B cell (primary cell): ENCODE measurements at regions of chr19 and their contacts with region 1.

Region 1: GRCh38 chr19:53431399-53432087 is at the start of gene ZNF761:
- DNase-seq: peak; percentile 97
- ATAC-seq: peak; percentile 98
- H3K4me3 ChIP-seq: peak within 1 kb of the TSS; percentile 60 to 83 (median 79)
- H3K4me3 Mint-ChIP-seq: peak within 1 kb of the TSS; percentile 95
- H3K27ac ChIP-seq: peak within 1 kb of the TSS; percentile 61 to 82
- H3K27ac Mint-ChIP-seq: peak within 1 kb of the TSS; percentile 89
- H3K4me1 ChIP-seq: peaks cover 10 to 13% of the 10 kb centered on the region in 2 donors
- H3K4me1 Mint-ChIP-seq: peaks cover 34% of the 10 kb centered on the region
- H3K27me3 ChIP-seq: no peaks in the 10 kb centered on the region
- H3K27me3 Mint-ChIP-seq: no peaks in the 10 kb centered on the region
- CTCF ChIP-seq: peak; percentile 39
- total RNA-seq, gene ZNF761: 14.9 and 18.9 TPM in 2 replicates

Region 2: DNA sequence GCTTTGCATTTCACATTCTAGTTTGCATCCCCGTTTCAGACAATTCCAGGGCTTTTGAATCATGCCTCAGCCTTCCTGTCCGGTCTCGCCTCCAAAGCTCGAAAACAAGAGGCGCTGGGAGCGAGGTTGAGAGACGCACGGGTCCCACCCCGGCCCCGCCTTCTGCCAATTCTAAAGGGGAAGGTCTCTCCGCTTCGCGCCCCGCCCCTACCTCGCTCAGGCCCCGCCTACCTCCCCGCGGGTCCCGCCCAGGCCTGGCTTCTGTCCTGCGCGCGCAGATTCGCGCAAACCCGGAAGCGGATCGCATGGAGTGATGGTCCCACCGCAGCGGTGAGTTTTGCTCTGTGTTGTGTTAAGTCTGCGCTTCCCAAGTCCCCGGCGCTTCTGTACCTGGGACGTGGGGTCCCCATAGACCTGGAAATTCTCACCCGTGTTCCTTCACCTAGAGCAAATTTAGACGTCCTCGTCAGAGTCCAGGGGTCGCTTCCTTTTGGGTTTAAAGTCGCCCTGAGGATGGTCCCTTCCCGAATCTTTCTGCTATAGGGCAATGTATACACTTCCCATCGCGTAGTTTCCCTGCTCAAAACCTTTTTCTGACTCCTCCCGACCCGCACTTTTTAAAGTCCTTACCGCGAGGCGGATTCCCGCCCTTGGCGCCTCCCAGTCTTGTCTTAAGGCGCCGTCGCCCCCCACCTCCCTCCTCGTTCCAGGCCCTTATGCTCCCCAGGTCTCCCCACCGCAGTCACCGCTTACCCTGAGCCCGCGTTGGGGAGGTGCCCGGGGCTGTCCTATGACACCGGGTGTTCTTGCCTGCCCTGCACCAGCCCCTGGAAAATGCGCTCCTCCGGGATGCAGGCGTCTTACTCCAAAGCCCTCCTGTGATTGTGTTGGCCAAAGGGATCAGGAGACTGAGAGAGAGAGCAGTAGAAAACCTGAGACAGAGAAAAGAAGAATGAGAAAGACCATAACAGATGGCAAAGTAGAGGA is 97.8 kb before region 1 on chr19 and contains the start of gene ZNF845:
- CTCF ChIA-PET with region 1: no interaction called
- POLR2A ChIA-PET with region 1: no interaction called
- intact Hi-C with region 1: loop called (anchors 1 kb)
- DNase-seq: peak; percentile 95
- ATAC-seq: peak; percentile 100
- H3K4me3 ChIP-seq: peak within 1 kb of the TSS; percentile 94 to 99 (median 96)
- H3K4me3 Mint-ChIP-seq: peak within 1 kb of the TSS; percentile 96
- H3K27ac ChIP-seq: peak within 1 kb of the TSS; percentile 60 to 81
- H3K27ac Mint-ChIP-seq: peak within 1 kb of the TSS; percentile 95
- H3K4me1 ChIP-seq: peaks cover 10 to 21% of the 10 kb centered on the region in 2 donors
- H3K4me1 Mint-ChIP-seq: peaks cover 22% of the 10 kb centered on the region
- H3K27me3 ChIP-seq: peaks cover 0 to 3% (median 0%) of the 10 kb centered on the region in 4 experiments
- H3K27me3 Mint-ChIP-seq: peaks cover 11% of the 10 kb centered on the region
- CTCF ChIP-seq: no peak
- total RNA-seq, gene ZNF845: 16.9 and 17.4 TPM in 2 replicates

Region 3: DNA sequence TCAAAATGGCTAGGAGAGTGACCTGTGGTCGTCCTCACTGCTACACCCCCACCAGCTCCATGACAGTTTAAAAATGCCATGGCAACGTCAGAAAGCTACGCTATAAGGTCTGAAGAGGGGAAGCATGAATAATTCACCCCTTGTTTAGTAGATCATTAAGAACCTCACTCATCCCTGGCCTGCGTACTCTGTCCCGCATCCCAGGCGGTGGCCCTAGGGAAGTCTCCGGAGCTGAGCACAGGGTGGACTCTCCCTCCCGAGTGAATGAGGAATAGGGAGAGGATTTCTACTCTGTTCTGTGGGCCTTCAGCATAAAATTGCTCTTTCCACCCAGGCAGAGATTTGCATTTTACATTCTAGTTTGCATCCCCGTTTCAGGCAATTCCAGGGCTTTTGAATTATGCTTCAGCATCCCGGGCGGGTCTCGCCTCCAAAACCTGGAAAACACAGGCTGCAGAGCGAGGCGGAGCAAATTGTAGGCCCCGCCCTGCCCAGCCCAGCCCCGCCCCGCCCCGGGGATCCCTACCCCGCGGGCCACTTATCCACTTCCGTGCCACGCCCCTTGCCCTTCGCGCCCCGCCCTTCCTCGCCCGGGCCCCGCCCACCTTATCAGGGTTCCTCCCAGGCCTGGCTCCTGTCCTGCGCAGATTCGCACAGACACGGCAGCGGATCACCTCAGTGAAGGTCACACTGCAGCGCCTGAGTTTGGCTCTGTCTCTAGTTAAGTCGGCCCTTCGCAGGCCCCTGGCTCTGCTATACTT is 73.5 kb before region 1 on chr19:
- CTCF ChIA-PET with region 1: no interaction called
- POLR2A ChIA-PET with region 1: no interaction called
- intact Hi-C with region 1: no loop called
- DNase-seq: no peak
- ATAC-seq: no peak
- H3K4me3 ChIP-seq: no peak overlapping the region
- H3K4me3 Mint-ChIP-seq: no peak overlapping the region
- H3K27ac ChIP-seq: no peak overlapping the region
- H3K27ac Mint-ChIP-seq: no peak overlapping the region
- H3K4me1 ChIP-seq: no peaks in the 10 kb centered on the region
- H3K4me1 Mint-ChIP-seq: no peaks in the 10 kb centered on the region
- H3K27me3 ChIP-seq: no peaks in the 10 kb centered on the region
- H3K27me3 Mint-ChIP-seq: no peaks in the 10 kb centered on the region
- CTCF ChIP-seq: no peak